ENCODE measurements at regions of chr10 and their contacts with region 1.

Region 1: GRCh38 chr10:122980209-122981065 is at the start of gene PSTK:
- DNase-seq: peak; percentile 84
- ATAC-seq: peak; percentile 96
- H3K4me3 Mint-ChIP-seq: peak within 1 kb of the TSS; percentile 93
- H3K27ac Mint-ChIP-seq: peak within 1 kb of the TSS; percentile 96
- H3K4me1 Mint-ChIP-seq: peaks cover 18% of the 10 kb centered on the region
- H3K27me3 Mint-ChIP-seq: peaks cover 7% of the 10 kb centered on the region
- CTCF ChIP-seq: no peak
- total RNA-seq, gene PSTK: 3.9 and 5.3 TPM in 2 replicates

Region 2: GRCh38 chr10:122154545-122155366 is 825.7 kb before region 1 on chr10:
- CTCF ChIA-PET with region 1: no interaction called
- POLR2A ChIA-PET with region 1: no interaction called
- intact Hi-C with region 1: no loop called
- DNase-seq: no peak
- ATAC-seq: no peak
- H3K4me3 Mint-ChIP-seq: no peak overlapping the region
- H3K27ac Mint-ChIP-seq: no peak overlapping the region
- H3K4me1 Mint-ChIP-seq: no peaks in the 10 kb centered on the region
- H3K27me3 Mint-ChIP-seq: peaks cover 11% of the 10 kb centered on the region
- CTCF ChIP-seq: no peak

Region 3: DNA sequence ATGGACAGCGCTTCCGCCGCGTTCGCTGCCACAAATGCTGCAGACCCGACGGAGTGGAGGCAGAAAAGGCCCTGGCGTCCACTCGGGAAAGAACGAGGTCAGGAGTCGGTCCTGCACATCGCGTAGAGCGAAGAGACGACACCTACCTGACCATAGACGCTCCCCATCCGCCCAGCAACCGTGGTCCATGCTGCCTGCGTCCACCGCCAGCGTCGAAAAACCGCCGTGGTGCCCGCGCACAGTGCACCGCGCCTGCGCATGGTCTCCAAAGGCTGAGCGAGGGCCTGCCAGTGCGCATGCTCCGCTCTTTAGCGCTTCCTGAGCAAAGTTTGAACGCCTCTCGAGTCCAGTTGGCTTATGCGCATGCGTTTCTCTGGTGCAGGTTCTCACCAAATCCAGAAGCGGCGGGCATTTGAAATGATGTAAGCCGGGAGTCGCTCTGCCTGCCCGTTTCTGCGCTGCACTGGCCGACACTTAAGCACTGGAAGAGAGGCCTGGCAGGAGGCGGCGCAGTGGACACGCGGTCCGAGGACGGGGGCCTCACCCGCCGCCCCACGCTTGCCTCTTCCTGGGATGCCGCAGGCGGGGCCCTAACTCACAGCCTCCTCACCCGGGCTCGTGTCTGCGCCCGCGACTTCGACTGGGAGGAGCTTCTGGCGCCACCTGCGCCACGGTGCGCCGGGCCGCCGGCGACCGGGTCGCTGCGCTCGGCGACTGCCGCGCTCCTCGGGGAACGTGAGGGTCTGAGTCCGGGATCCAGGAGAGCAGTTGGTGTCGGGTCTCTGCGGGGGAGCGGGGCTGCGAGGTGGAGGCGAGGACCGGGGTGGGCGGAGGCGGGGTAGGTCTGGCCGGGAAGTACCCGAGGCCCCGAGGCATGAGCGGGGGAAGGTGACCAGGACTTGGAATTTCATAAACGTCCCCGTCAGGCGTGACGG is 100.8 kb before region 1 on chr10 and contains the start of gene FAM24B:
- CTCF ChIA-PET with region 1: no interaction called
- POLR2A ChIA-PET with region 1: no interaction called
- intact Hi-C with region 1: loop called (anchors 1 kb)
- DNase-seq: peak; percentile 83
- ATAC-seq: peak; percentile 85
- H3K4me3 Mint-ChIP-seq: peak within 1 kb of the TSS; percentile 85
- H3K27ac Mint-ChIP-seq: peak within 1 kb of the TSS; percentile 84
- H3K4me1 Mint-ChIP-seq: peaks cover 40% of the 10 kb centered on the region
- H3K27me3 Mint-ChIP-seq: no peaks in the 10 kb centered on the region
- CTCF ChIP-seq: no peak
- total RNA-seq, gene FAM24B: 7.3 and 10.0 TPM in 2 replicates

Region 4: DNA sequence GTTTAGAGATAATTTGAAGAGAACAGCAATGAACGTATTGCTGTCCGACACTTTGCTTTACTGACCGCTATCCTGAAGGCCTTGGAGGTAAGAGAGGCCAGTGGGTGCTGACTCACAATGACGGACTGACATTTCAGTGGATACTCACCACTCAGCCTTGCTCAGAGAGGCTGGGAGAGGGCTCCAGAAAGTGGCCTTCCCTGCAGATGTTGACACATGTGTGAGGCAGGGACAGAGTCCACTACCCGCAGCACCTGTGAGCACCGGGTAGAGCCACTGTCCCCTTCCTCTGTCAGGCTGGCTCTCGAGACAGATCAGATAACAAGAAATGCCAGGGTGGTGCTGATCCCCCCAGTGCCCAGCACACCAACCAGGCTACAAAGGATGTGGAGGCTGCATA is 760.7 kb after region 1 on chr10:
- CTCF ChIA-PET with region 1: no interaction called
- POLR2A ChIA-PET with region 1: no interaction called
- intact Hi-C with region 1: no loop called
- DNase-seq: no peak
- ATAC-seq: no peak
- H3K4me3 Mint-ChIP-seq: no peak overlapping the region
- H3K27ac Mint-ChIP-seq: no peak overlapping the region
- H3K4me1 Mint-ChIP-seq: no peaks in the 10 kb centered on the region
- H3K27me3 Mint-ChIP-seq: peaks cover 3% of the 10 kb centered on the region
- CTCF ChIP-seq: no peak